Cardiac septum (tissue), 1 donor: ENCODE measurements at regions of chr3 and their contacts with region 1.

Region 1: DNA sequence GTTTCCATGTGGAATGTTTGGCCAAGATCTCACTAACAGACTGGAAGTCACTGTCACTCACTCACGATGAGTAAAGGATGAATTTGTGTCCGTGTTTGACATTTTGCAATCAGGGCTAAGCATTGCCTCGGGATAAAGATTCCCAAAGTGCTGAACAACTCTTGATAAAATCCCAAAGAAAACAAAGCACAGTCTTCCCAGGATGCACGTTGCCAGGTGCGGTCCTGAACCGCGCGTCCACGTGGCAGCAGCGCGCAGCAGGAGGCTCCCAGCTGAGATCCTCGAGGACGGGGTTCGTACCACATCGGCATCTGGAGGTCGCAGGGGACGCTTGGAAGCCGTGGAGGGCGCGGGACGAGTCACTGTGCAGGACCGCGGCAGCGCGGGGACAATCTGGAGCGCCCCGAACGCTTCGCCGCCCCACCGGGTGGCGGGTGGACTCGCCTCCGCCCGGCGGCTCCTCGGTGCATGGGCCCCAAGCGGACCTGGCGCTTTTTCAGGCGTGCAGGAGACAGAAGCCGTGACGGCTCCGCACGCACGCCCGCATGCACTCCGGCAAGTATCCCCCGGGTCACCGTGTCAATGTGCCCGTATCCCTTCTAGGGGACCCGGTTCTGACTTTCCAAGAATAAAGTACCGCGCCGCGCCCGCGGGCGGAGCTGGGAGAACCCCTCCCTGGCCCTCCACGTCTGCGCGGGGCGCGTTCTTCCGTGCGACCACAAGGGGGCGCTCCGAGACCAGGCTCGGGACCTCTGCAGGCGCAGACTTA is 17.7 kb downstream of the CPN2 start:
- DNase-seq: peak; percentile 93

Region 2: GRCh38 chr3:193665370-193665989 is 667.9 kb before region 1 on chr3:
- intact Hi-C with region 1: loop called (anchors 10 kb)
- DNase-seq: no peak

Region 3: DNA sequence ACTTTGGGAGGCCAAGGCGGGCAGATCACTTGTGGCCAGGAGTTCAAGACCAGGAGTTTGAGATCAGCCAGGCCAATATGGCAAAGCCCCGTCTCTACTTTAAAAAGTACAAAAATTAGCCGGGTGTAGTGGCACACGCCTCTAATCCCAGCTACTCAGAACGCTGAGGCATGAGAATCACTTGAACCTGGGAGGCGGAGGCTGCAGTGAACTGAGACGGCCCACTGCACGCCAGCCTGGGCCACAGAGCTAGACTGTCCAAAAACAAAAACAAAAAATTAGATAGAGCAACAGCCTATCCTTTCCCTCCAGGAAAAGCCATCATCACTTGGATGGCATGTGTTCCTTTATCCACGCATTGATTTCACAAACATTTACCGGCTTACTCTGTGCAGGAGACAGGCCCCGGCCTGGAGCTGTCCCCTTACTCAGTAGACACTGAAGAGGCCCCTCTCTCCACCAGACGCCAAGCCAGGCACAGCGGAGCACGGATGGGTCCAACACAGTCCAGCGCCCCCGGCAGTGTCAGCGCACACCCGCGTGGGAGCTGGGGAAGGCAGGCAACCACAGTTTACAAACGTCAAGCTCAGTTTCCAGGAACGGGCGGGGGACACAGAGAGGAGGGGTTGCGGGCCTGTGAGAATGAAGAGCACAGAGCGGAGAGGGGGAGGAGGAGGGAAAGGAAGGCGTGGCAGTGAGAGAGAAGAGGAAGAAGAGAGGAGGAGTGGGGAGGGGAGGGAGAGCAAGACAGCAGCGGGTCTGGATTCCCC is 62.6 kb after region 1 on chr3:
- intact Hi-C with region 1: loop called (anchors 5 kb)
- DNase-seq: no peak

Region 4: DNA sequence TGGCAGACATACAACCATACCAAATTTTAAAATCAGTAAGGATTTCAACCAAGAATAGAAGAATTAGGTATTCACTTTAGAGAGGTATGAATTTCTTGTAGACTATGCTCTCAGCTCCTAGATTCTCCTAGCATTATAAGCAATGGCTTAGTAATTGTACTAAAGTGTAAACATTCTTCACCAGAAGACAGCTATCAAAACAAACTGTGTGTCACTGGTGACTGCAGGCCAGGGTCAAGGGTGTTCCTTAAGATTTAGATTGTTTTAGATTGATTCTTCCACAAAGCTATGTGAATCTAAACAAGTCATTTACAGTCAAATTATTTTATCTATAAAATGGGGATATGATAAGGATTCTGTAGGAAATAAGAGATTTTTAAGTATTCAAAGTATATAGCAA is 88.8 kb after region 1 on chr3:
- intact Hi-C with region 1: no loop called
- DNase-seq: no peak

Region 5: DNA sequence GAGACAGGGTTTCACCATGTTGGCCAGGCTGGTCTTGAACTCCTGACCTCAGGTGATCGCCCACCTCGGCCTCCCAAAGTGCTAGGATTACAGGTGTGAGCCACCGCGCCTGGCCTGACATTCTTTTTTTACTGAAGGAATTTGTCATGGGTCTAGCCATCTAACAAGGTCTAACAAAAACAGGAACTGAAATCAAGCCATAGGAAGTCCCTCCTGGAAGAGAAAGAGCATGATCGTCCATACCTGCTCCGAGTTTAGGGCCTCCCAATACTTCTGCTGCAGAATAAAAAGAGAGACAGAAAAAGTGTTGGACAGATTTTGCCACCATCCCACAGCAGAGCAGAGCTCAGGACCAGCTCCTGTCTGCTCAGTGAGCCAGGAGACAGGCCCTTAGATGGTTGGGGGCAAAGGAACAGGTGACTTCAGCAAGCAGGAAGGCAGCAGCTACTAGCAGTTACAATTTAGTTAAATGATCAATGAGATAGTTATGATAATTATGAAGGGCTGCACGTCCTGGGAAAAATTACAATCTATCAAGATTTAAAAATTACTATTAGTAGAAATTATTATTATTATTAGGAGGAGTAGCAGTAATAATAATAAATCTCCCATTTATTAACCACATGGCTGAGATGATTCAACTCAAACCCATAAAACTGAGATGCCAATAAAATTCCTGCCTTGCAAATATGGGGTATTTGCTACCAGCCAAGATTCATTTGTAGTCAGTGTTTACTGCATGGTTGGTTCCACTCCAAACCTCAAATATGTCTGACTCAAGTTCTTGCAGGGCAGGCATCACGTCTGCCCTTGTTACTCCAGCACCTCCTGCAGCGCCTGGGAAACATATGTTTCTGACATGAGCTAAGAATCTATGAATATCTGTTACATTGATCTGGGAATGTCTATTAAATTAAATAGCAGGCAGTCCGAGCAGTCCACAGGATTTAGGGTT is 259.7 kb after region 1 on chr3:
- intact Hi-C with region 1: loop called (anchors 5 kb)
- DNase-seq: no peak

Region 6: DNA sequence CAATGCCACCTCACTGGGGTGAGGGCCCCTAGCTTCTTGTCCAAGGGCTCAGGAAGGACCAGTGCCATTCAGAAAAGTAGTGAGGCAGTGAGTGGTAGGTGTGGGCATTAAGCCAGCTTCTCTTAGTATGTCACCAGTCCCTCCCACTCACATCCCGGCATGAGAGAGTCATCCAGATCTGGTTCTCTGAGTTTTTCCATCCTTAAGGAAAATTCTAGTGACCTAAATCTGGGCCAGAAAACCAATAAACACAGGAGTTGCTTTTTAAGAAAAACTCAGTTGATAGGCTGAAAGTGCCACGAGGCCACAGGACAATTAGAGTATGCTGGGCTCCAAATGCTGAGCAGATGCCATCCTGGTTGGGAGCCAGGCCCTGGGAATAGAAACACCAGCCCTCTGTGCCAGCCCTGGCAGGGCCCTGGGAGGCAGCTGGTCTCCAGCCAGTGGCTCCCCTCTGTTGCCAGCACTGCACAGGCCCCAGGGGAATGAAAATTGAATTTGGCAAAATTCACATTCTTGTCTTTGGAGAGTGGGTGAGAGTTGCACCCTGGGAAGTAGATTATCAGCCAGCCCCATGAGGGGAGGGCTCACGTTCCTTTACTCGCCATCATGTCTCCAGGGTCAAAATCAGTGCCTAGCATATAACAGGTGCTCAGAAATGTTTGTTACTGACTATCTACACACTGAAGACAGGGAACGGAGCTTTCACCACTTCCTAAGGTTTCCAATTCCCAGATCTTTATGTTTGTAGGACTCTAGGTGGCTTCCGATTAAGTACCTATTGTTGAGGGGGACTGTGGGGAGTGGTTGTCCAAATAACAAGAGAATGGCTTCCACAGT is 405.1 kb after region 1 on chr3:
- intact Hi-C with region 1: loop called (anchors 10 kb)
- DNase-seq: peak; percentile 87